Activated CD8-positive, alpha-beta memory T cell treated with anti-CD3 and anti-CD28 coated beads, Interleukin-2, amount 10 ng/mL, durations not matched to agents 7 days and 5 days (primary cell): ENCODE measurements at regions of chr12 and their contacts with region 1.

Region 1: DNA sequence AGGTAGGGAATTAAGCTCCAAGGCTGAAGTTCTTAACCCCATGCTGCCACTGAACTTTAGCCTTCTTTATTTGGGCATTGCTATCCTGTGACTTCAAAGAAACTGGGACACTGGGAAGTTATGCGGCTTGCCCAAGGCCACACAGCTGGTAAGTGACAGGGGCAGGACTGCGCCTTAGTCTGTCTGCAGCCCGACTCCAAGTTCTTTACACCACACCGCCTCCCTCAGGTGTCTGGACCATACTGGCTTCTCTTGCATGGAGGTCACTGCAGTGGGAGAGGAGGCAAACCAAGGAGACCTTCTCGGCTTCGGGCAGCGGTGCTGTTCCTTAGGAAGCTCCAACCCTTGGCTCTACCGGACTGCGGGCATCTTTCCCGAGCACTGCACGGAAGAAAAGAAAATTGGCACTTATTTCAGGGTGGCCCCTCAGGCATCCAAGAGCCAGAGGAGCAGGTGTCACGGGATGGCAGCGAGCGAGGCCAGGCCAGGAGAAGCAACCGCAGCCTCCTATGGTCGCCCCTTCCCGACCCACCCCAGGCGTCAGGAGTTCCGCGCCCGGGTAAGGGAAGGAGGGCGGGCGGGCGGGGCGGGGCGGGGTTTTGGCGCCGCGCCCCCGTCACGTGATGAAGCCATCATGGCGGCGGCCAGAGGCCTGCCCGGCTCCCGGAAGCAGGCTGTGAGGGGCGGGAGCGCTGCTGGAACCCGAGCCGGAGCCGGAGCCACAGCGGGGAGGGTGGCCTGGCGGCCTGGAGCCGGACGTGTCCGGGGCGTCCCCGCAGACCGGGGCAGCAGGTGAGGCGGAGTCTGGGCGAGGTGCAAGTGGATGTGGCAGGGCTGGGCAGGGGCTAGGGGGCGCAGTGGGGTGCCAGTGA is 16.4 kb upstream of the ESPL1 start:
- DNase-seq: peak; percentile 81
- ATAC-seq: peak; percentile 89
- H3K4me3 Mint-ChIP-seq: peak overlapping the region; percentile 99
- H3K27ac Mint-ChIP-seq: peak overlapping the region; percentile 88
- H3K4me1 Mint-ChIP-seq: peaks cover 42% of the 10 kb centered on the region
- H3K27me3 Mint-ChIP-seq: no peaks in the 10 kb centered on the region

Region 2: GRCh38 chr12:53220801-53221202 is 30.9 kb before region 1 on chr12:
- CTCF ChIA-PET with region 1: interaction called, 294 read pairs
- DNase-seq: peak; percentile 92
- ATAC-seq: peak; percentile 71
- H3K4me3 Mint-ChIP-seq: peak overlapping the region; percentile 89
- H3K27ac Mint-ChIP-seq: peak overlapping the region; percentile 98
- H3K4me1 Mint-ChIP-seq: peaks cover 72% of the 10 kb centered on the region
- H3K27me3 Mint-ChIP-seq: no peaks in the 10 kb centered on the region

Region 3: DNA sequence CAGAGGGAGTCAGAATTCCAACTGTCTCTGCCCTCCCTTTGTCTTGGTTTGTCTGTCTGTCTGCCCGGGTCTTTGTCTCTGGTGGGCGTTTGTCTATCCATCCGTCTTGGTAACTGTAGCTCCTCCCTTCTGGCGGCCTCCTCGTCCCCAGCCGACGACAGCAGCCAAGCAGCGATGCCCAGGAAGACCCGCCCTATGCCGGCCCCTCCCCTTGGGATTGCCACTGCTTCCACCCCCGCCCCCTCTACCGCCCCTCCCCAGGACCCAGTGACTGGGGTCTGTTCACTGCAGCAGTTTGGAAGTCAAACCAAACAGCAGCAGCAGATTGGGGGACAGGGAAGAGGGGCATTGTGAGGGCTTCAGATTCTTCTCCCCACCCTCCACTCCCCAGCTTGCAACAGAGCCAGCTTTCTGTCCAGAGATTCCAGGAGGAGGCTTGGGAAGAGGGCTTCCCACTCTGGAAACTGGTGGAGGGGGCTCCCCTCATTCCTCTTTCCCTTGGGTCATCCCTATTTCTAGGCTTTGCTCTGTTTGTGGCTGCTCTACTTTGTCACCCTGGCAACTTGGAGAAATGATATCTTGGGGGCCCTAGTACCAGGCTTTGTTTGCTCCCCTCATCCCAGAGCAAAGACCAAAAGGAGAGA is 17.3 kb before region 1 on chr12:
- CTCF ChIA-PET with region 1: interaction called, 11 read pairs
- DNase-seq: no peak
- ATAC-seq: no peak
- H3K4me3 Mint-ChIP-seq: no peak overlapping the region
- H3K27ac Mint-ChIP-seq: no peak overlapping the region
- H3K4me1 Mint-ChIP-seq: peaks cover 49% of the 10 kb centered on the region
- H3K27me3 Mint-ChIP-seq: no peaks in the 10 kb centered on the region